Mammary epithelial cell (primary cell): ENCODE measurements at regions of chr7 and their contacts with region 1.

Region 1: DNA sequence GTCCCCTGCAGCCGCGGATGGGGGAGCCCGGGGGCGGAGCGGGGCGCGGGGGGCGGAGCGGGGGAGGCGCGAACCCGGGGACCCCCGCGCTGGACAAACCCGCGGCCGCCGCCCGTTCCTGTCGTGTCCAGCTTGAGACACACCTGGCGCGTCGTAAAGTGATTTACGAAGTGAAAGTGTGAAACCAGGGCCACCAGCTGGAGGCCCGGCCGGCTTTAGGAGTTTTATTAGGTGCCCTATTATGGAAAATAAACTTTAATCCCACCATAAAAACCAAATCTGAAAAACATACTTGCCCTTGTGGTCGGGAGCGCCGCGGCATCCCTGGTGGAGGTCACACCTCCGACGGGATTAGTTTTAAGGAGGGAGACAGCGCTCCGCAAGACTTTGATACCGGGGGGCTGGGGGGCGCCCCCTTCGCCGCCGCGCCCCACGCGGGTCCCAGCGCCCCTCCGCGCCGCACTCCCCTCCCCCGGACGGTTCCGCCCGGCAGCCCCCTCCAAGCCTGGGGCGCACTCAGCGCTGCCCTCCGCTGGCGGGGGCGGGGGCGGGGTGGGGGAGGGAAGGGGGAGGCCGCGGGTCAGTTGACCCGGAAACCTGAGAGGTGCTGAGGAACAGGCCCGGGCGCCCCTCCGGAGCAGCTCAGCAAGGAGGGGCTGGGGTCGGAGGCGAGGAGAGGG is 10.3 kb downstream of the MNX1 start:
- DNase-seq: no peak
- H3K4me3 ChIP-seq: peak overlapping the region; percentile 50 to 61 (median 60)
- H3K27ac ChIP-seq: no peak overlapping the region
- H3K4me1 ChIP-seq: peaks cover 9% of the 10 kb centered on the region
- H3K27me3 ChIP-seq: peaks cover 2% of the 10 kb centered on the region
- CTCF ChIP-seq: no peak

Region 2: GRCh38 chr7:156764016-156764669 is 236.0 kb before region 1 on chr7:
- CTCF ChIA-PET with region 1: no interaction called
- dilution Hi-C with region 1: no loop called
- in situ Hi-C with region 1: no loop called
- intact Hi-C with region 1: no loop called
- DNase-seq: peak; percentile 58
- H3K4me3 ChIP-seq: no peak overlapping the region
- H3K27ac ChIP-seq: no peak overlapping the region
- H3K4me1 ChIP-seq: no peaks in the 10 kb centered on the region
- H3K27me3 ChIP-seq: no peaks in the 10 kb centered on the region
- CTCF ChIP-seq: peak; percentile 61 to 79

Region 3: GRCh38 chr7:156956727-156957126 is 43.5 kb before region 1 on chr7:
- CTCF ChIA-PET with region 1: no interaction called
- dilution Hi-C with region 1: loop called (anchors 5 kb)
- in situ Hi-C with region 1: no loop called
- intact Hi-C with region 1: no loop called
- DNase-seq: no peak
- H3K4me3 ChIP-seq: no peak overlapping the region
- H3K27ac ChIP-seq: no peak overlapping the region
- H3K4me1 ChIP-seq: peaks cover 16% of the 10 kb centered on the region
- H3K27me3 ChIP-seq: no peaks in the 10 kb centered on the region
- CTCF ChIP-seq: no peak

Region 4: DNA sequence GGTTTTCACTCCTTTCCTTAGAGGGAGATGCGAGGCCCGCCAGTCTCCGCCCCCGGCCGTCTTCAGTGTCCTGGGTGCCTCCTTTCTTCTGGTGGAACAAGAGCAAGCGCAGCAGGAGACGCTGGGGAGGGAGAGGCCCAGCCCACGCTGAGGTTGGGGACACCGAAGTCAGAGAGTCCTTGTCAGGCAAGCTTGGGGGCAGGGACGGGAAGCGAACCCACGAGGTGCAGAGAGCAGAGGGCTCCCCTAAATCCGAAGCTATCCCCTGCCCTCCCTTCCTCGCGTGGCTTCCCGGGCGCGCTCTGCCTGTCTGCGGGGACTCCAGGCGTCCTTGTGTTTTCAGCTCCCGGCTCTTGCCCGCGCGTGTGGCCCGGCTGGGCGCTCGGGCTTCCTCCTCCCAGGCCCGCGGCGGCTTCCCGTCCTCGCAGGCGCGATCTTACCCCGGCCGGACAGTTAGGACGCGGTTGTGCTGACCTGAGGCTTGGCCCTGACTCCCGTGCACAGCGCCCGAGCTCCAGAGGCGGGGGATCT is 78.0 kb after region 1 on chr7:
- CTCF ChIA-PET with region 1: no interaction called
- dilution Hi-C with region 1: loop called (anchors 5 kb)
- in situ Hi-C with region 1: no loop called
- intact Hi-C with region 1: no loop called
- DNase-seq: no peak
- H3K4me3 ChIP-seq: peak overlapping the region in 1 of 3 experiments; percentile 15
- H3K27ac ChIP-seq: no peak overlapping the region
- H3K4me1 ChIP-seq: peaks cover 4% of the 10 kb centered on the region
- H3K27me3 ChIP-seq: no peaks in the 10 kb centered on the region
- CTCF ChIP-seq: no peak

Region 5: DNA sequence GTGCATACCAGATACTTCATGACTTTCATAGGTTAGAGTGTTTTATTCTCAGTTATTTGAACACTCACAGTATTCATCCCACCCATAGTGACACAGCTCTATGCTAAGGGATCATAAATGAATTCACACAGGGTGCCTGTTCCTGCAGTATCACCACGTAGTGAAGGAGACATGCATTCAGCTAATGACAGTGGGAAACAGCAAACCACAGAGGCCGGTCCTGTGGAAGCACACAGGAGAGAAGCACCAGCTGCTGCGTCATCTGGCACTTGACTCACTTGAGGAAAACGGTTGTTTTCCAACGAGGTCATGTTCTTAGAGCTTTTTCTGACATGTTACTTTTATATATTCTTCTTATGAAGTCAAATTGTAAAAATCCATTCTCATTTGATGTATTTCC is 211.5 kb after region 1 on chr7:
- CTCF ChIA-PET with region 1: interaction called, 15 read pairs
- dilution Hi-C with region 1: no loop called
- in situ Hi-C with region 1: no loop called
- intact Hi-C with region 1: no loop called
- DNase-seq: peak; percentile 1
- H3K4me3 ChIP-seq: no peak overlapping the region
- H3K27ac ChIP-seq: no peak overlapping the region
- H3K4me1 ChIP-seq: no peaks in the 10 kb centered on the region
- H3K27me3 ChIP-seq: no peaks in the 10 kb centered on the region
- CTCF ChIP-seq: no peak

Region 6: DNA sequence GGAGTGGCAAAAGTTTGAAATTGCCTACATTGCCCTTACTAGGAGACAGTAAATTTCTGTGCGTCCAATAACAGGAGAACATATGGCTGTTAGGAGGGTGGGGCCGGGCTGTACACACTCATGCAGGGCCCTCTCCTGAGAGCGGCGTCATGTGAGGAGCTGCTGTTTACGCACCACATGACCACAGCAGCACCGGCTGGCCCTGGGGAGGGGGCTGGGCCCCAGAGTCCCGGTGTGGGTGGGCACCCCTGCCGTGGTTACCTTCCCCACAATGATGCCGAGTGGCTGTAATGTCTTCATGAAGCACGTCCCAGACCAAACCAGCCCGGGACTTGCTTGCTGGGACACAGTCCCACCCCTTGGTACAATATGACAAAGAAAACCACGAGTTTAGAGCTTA is 645.4 kb after region 1 on chr7:
- CTCF ChIA-PET with region 1: no interaction called
- dilution Hi-C with region 1: no loop called
- in situ Hi-C with region 1: no loop called
- intact Hi-C with region 1: no loop called
- DNase-seq: no peak
- H3K4me3 ChIP-seq: no peak overlapping the region
- H3K27ac ChIP-seq: no peak overlapping the region
- H3K4me1 ChIP-seq: no peaks in the 10 kb centered on the region
- H3K27me3 ChIP-seq: no peaks in the 10 kb centered on the region
- CTCF ChIP-seq: no peak